Left ventricle myocardium superior (tissue), 1 donor: ENCODE measurements at regions of chr10 and their contacts with region 1.

Region 1: DNA sequence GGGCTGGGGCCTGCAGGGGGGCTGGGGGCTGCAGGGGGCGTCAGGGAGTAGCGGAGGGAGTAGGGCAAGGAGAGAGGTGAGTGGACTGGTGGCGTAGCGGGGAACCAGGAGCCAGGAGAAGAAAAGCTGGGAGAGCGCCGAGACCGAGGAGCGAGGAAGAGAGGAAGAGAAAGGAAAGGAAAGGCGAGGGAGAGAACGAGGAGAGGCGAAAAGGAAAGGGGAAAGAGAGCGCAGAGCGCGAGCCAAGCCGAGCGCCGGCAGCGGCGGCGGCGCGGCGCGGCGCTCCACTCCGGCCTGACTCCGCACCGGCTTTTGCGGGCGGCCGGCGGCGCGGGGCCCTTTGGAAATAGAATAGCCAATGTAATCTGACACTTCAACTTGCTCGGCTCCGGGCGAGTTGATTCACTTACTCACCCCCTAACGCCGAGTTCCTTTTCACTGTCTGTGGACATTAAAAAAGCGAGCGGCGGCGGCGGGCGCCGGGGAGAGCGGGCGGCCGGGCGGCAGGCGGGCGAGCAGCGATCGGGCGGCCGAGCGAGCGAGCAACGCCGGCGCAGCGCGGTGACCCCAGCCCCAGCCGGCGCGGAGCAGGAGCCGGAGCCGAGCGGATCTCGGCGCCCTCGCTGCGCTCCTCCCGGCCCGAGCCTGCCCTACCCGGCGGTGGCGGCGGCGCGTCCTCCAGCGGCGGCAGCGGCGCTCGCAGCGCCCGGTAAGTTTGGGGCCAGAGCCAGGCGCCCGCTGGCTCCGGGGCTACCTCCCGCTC is at the start of gene ZMIZ1:
- DNase-seq: peak; percentile 93
- ATAC-seq: peak; percentile 39
- total RNA-seq, gene ZMIZ1: 49.5 TPM

Region 2: DNA sequence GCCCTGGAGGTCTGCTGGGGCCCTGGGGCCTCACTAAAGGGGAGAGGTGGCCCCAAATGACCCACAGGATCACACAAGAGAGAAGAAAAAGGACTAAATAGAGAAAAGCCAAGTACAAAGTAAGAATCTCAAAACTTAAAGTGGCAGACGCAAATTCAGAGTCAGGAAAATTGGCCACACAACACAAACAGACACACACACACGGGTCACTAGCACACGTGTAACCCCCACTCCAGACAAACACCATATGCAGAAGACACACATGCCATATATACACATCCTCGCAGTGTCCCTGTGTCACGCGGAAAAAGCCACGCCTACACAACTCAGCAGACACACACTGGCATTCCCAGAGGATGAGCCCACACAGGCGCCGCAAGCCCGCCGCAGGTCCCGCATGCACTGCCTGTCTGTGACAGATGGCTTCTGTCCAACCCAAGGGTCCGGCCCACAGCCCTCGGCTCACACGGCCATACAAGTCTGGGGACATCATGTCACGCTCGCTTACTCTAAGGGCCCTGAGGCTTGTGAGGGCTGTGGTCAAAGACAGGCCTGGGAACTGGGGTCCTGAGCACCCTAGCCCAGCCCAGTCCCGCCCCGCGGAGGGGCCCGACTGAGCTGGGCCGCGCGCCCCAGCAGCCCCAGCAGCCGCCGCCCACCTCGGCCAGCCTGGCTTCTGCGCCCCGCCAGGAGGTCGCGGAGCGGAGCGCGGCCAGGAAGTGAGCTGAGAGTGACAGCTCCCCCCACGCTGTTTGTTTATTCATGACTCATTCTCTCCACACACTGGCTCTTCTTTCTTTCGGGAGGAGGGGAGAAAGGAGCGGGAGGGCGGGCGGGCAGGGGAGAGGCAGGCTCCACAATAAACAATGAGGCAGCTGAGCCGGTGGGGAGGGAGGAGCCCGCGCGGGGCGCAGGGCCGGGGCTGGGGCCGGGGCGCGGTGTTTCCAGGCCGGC is 95.5 kb before region 1 on chr10:
- intact Hi-C with region 1: loop called (anchors 10 kb)
- DNase-seq: peak; percentile 88
- ATAC-seq: peak; percentile 78

Region 3: GRCh38 chr10:78991187-78991586 is 77.6 kb before region 1 on chr10:
- intact Hi-C with region 1: no loop called
- DNase-seq: no peak
- ATAC-seq: no peak

Region 4: DNA sequence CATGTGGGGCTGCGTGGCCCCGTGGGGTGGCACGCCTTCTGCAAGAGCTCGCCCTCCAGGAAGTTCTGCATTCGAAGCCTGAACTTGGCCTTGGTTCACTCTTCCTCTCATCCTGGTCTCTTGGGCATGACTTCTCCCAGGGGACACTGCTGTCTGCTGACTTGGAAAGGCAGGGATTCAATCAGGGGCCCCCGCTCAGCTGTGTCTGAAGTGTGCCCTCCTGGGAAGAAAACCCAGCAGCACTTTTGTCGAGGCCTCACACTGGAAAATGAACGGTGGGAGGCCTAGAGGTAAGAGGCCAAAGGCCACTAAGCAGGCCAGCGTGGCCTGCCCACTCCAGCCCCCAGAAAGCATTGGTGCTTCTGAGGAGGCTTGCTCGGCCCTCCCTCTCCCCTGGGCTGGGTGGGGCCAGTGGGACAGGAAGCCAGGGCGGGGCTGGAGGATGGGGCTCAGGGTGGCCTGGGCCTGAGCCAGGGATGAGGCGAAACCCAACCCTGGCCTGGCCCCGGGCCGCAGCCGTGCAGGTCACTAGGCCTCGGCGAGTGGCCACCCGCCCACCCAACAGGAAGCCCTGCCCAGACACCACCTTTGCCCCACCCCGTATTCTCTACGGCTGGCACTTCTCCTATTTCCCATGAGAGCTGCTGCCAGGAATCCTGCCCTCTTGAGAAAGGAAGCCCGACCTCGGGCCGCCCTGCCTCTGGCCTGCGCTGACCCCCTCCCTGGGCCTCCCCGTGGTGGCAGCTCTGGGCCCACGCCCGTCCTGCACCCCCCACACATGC is 81.1 kb after region 1 on chr10:
- intact Hi-C with region 1: loop called (anchors 10 kb)
- DNase-seq: peak; percentile 93
- ATAC-seq: peak; percentile 58

Region 5: GRCh38 chr10:79184145-79184625 is 115.4 kb after region 1 on chr10:
- intact Hi-C with region 1: loop called (anchors 10 kb)
- DNase-seq: peak; percentile 25
- ATAC-seq: peak; percentile 18

Region 6: DNA sequence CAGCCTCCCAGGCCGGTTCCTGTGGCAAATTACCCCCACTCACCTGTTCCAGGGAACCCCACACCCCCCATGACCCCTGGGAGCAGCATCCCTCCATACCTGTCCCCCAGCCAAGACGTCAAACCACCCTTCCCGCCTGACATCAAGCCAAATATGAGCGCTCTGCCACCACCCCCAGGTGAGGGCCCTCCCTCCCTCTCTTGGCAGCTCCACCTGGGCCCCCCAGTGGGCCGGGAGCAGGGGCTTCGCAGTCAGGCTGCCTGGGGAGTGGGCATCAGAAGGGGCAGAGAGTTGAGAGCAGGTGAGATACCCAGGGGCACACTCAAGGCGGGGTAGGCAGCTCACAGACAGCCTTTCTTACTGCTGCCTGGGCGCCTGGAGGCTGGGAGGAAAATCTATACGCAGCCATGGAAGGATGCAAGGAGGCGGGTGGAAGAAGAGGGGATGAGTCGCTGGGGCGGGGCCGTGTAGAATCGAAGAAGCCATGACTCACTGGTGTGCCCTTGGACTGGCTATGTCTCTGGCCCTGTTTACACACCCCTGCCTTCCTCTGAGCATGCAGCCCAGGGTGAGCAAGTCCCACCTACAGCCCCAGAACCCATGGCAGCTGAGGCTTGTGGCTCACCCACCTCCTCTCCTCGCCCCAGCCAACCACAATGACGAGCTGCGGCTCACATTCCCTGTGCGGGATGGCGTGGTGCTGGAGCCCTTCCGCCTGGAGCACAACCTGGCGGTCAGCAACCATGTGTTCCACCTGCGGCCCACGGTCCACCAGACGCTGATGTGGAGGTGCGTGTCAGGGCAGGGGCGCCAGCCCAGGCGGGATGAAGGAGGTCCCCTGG is 229.9 kb after region 1 on chr10:
- intact Hi-C with region 1: no loop called
- DNase-seq: peak; percentile 31
- ATAC-seq: peak; percentile 11